PC-9 (cell line): ENCODE measurements at regions of chr7 and their contacts with region 1.

Region 1: GRCh38 chr7:30062591-30062990 is 34.4 kb downstream of the PLEKHA8 start:
- DNase-seq: peak in 1 of 2 experiments; percentile 53
- H3K4me3 ChIP-seq: no peak overlapping the region
- H3K27ac ChIP-seq: no peak overlapping the region
- H3K4me1 ChIP-seq: peaks cover 4% of the 10 kb centered on the region
- H3K27me3 ChIP-seq: no peaks in the 10 kb centered on the region
- CTCF ChIP-seq: peak; percentile 89

Region 2: DNA sequence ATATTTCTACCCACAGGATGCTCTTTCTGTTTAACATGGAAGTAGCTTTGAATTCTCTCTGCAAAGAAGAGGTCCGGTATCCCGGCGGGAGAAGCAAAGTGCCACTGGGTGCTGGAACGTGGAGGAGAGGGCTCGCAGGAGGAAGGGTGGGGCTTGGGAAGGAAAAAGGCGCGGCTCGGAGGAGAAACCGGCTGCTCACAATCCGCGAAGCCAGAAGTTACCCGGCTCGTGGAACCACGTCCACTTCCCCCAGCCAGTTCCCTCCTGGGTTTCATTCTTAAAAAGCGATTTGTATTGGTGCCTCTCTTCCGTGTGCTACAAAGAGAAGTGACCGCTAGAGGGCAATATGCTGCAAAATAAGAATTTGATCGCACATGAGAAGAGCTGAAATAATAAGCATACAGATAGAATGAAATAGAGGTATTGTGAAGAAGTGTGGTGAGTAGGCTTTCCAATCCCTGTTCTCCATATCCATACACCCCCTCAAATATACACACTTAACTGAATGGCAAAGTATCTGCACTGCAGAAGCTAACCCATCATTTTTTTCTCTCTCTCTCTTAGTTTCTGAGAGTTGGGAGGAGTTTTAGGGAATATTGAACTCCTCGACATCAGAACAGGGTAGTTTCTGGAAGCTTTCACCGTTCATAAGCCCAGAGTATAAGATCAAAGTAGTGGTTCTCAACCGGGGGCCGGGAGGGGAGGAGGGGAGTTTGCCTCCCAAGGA is 1135.6 kb before region 1 on chr7:
- CTCF ChIA-PET with region 1: interaction called, 4 read pairs
- POLR2A ChIA-PET with region 1: no interaction called
- intact Hi-C with region 1: loop called (anchors 2 kb)
- DNase-seq: peak; percentile 45 to 82
- H3K4me3 ChIP-seq: peak overlapping the region; percentile 54
- H3K27ac ChIP-seq: no peak overlapping the region
- H3K4me1 ChIP-seq: peaks cover 13% of the 10 kb centered on the region; the same call in 1 of the 2 replicates
- H3K27me3 ChIP-seq: no peaks in the 10 kb centered on the region
- CTCF ChIP-seq: peak; percentile 97

Region 3: GRCh38 chr7:29639881-29640595 is 422.6 kb before region 1 on chr7:
- CTCF ChIA-PET with region 1: interaction called, 4 read pairs
- POLR2A ChIA-PET with region 1: no interaction called
- intact Hi-C with region 1: loop called (anchors 5 kb)
- DNase-seq: no peak
- H3K4me3 ChIP-seq: no peak overlapping the region
- H3K27ac ChIP-seq: no peak overlapping the region
- H3K4me1 ChIP-seq: peaks cover 14% of the 10 kb centered on the region
- H3K27me3 ChIP-seq: no peaks in the 10 kb centered on the region
- CTCF ChIP-seq: no peak

Region 4: GRCh38 chr7:29878081-29878688 is 184.4 kb before region 1 on chr7:
- CTCF ChIA-PET with region 1: interaction called, 13 read pairs
- POLR2A ChIA-PET with region 1: no interaction called
- intact Hi-C with region 1: loop called (anchors 1 kb)
- DNase-seq: peak; percentile 50 to 59
- H3K4me3 ChIP-seq: no peak overlapping the region
- H3K27ac ChIP-seq: no peak overlapping the region
- H3K4me1 ChIP-seq: no peaks in the 10 kb centered on the region
- H3K27me3 ChIP-seq: no peaks in the 10 kb centered on the region
- CTCF ChIP-seq: peak; percentile 90

Region 5: DNA sequence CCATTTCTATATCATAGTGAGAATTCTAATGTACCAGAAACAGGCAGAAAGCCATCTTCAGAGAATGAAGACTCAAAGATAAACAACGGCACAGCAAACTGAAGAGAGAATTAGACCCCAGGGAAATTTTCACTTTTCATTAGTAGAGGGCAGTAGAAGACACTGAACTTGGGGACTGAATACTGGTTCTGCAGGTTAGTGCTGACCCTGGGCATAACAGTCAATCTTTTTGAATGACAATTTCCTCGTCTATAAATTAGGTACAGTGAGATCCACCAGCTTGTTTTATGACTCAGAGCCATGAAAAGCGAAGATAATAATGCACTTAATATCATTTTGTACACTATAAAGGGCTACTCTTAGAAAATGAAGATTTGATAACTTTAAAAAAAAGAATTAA is 49.8 kb before region 1 on chr7:
- CTCF ChIA-PET with region 1: no interaction called
- POLR2A ChIA-PET with region 1: interaction called, 3 read pairs
- intact Hi-C with region 1: loop called (anchors 2 kb)
- DNase-seq: peak in 1 of 2 experiments; percentile 81
- H3K4me3 ChIP-seq: no peak overlapping the region
- H3K27ac ChIP-seq: no peak overlapping the region
- H3K4me1 ChIP-seq: peaks cover 6% of the 10 kb centered on the region
- H3K27me3 ChIP-seq: no peaks in the 10 kb centered on the region
- CTCF ChIP-seq: no peak; the same call in 1 of the 2 replicates

Region 6: GRCh38 chr7:30412810-30413504 is 350.4 kb after region 1 on chr7:
- CTCF ChIA-PET with region 1: interaction called, 11 read pairs
- POLR2A ChIA-PET with region 1: no interaction called
- intact Hi-C with region 1: loop called (anchors 5 kb)
- DNase-seq: peak; percentile 40 to 80
- H3K4me3 ChIP-seq: no peak overlapping the region
- H3K27ac ChIP-seq: no peak overlapping the region
- H3K4me1 ChIP-seq: no peaks in the 10 kb centered on the region
- H3K27me3 ChIP-seq: no peaks in the 10 kb centered on the region
- CTCF ChIP-seq: peak; percentile 84